OCI-LY7 (cell line): ENCODE measurements at regions of chr6 and their contacts with region 1.

Region 1: DNA sequence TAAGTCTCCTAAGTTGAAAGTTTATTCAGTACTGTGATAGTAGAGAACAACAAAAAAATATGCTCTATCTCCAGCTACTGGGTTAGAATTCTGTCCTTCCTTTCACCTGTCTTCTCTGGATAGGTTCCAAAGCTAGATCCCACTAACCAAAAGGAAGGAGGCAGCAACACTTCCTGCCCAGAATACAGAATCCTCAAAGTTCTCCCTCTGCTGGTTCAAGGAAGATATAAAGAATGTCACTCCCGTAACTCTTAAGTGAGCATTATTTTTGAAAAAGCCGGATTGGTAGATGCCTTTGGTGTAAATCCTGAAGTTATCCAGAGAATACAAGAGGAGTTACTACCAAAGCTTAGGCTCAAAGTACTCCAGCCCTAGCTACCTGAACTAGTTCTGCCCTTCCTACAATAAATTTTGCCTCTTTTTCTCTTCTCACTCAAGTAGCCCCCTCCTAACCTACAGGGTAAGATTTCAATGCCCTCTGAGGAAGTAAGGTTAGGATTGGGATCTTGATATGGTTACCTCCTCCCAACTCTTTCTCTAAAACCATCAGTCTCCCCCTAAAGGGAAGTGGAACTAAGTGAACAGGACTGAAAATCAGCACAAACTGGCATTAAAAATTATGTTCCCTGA is 26.0 kb upstream of the CRIP3 start:
- DNase-seq: peak; percentile 41
- H3K4me3 ChIP-seq: no peak overlapping the region
- H3K27ac ChIP-seq: no peak overlapping the region
- H3K4me1 ChIP-seq: peaks cover 17% of the 10 kb centered on the region
- CTCF ChIP-seq: peak; percentile 82

Region 2: DNA sequence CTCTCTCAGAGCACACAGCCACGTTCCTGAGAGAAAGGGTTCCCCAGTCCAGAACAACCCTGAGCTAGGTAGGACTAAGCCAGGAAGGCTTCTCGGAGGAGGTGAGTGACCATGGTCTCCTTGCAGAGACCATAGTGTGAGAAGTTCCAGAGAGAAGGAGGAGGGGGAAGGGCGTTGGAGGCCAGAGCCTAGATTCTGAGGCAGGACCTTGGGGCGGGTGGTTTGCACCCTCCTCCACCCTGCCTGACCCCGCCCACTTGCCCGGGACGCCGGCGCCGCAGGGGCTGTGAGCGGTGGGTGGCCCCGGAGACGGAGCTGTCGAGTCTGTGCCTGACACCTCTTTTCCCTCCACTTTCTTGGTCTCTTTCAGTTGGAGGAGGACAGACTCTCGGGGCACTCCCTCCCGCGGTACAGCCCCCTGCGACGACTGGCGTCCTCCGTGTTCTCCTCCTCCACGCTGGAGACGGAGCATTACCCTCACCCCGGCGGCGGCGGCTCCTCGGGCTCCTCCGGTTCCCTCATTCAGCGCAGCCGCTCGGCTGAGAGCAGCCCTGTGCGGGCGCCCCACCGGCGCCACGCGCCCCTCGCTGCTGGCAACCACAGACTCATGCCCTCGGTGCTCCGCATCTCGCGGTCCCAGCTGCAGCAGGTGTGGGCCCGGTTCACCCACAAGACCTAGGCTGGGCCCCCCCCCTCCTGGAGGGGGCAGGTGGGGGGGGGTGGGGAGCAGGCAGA is 65.1 kb before region 1 on chr6:
- CTCF ChIA-PET with region 1: no interaction called
- POLR2A ChIA-PET with region 1: no interaction called
- intact Hi-C with region 1: loop called (anchors 5 kb)
- DNase-seq: peak; percentile 45
- H3K4me3 ChIP-seq: peak overlapping the region; percentile 6
- H3K27ac ChIP-seq: no peak overlapping the region
- H3K4me1 ChIP-seq: peaks cover 32% of the 10 kb centered on the region
- CTCF ChIP-seq: no peak